ENCODE measurements at regions of chr6 and their contacts with region 1.

Region 1: GRCh38 chr6:106444777-106445507 is 84.4 kb downstream of the CRYBG1 start:
- DNase-seq: peak in 2 of 7 donors; percentile 26 to 34
- H3K4me3 ChIP-seq: no peak overlapping the region
- H3K27ac ChIP-seq: no peak overlapping the region
- H3K4me1 ChIP-seq: no peaks in the 10 kb centered on the region
- H3K27me3 ChIP-seq: peaks cover under 1% of the 10 kb centered on the region
- CTCF ChIP-seq: peak; percentile 57 to 87 (median 82)
- POLR2A ChIP-seq: no peak

Region 2: GRCh38 chr6:106339334-106340029 is 105.5 kb before region 1 on chr6:
- intact Hi-C with region 1: loop called in 1 of 2 experiments (anchors 10 kb)
- DNase-seq: peak; percentile 29 to 71 (median 62)
- H3K4me3 ChIP-seq: no peak overlapping the region
- H3K27ac ChIP-seq: no peak overlapping the region
- H3K4me1 ChIP-seq: no peaks in the 10 kb centered on the region
- H3K27me3 ChIP-seq: no peaks in the 10 kb centered on the region
- CTCF ChIP-seq: peak; percentile 55 to 67 (median 59)
- POLR2A ChIP-seq: no peak

Region 3: DNA sequence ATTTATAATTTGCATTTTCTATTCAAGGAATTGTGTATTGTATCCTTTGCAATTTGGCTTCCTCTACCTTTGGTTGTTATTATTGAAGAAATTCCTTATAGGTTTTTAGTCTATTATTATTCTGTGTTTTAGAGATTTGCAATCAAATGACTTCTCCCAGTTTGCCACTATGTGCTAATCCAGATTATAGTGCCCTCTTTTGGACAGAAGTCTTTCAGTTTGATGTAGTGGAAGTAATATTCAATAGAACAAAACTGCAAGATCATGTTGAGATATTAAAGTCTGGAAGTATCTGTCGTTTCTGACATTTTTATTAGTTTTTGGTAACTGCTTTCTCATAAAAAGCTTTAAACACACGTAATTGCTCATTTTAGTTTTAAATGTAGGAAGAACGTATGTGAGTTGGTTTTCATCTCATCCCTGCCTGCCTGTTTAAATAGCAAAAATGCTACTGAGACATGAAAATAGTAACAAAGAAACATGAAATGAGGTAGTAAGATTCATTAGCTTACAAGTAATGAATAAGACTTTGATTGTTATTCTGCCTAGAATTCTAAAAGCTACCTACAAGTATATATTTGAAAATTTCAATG is 111.5 kb after region 1 on chr6:
- intact Hi-C with region 1: loop called (anchors 5 kb)
- DNase-seq: no peak
- H3K4me3 ChIP-seq: no peak overlapping the region
- H3K27ac ChIP-seq: no peak overlapping the region
- H3K4me1 ChIP-seq: no peaks in the 10 kb centered on the region
- H3K27me3 ChIP-seq: no peaks in the 10 kb centered on the region
- CTCF ChIP-seq: peak in 3 of 6 experiments; percentile 4 to 30 (median 27)
- POLR2A ChIP-seq: no peak

Region 4: GRCh38 chr6:106568530-106568929 is 123.6 kb after region 1 on chr6:
- intact Hi-C with region 1: loop called (anchors 5 kb)
- DNase-seq: no peak
- H3K4me3 ChIP-seq: no peak overlapping the region
- H3K27ac ChIP-seq: no peak overlapping the region
- H3K4me1 ChIP-seq: no peaks in the 10 kb centered on the region
- H3K27me3 ChIP-seq: no peaks in the 10 kb centered on the region
- CTCF ChIP-seq: no peak
- POLR2A ChIP-seq: no peak

Region 5: DNA sequence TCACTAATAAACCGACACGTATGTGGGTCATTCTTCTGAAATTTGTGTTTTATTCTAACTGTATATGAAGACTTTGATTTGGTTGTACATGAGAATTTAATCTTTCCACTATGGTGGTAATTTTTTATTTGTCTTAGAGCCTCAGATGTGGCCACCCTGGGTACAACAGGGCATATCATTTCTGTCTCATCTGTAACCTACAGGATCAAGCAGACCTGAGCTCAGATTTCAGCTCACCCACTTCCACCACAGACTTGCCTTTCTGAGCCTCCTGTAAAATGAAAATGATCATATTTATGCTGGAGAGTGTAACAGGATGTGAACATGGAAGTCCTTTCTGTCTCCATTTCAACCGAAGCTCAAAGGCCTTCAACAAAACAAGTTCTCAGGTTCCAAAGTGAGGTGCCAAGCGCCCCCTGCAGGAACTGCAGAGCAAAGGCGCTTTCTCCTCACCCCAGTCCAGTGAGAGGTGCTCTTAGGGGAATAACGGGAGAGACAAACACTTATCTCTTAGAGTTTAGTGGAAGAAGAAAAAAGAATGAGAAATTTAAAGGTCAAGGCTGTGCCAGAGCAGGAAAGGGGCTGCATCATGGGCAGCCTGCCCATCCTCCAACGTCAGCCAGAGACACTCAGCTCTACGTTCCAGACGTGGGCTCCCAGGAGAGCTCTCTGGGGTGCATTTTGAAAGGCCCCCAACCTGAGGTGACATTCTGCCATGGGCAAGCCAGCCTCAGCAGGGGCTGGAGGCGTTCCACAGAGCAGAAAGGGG is 552.6 kb after region 1 on chr6:
- intact Hi-C with region 1: loop called (anchors 10 kb)
- DNase-seq: peak; percentile 63 to 79 (median 71)
- H3K4me3 ChIP-seq: no peak overlapping the region
- H3K27ac ChIP-seq: peak overlapping the region in 2 of 5 donors; percentile 60 to 82
- H3K4me1 ChIP-seq: peaks cover 0 to 6% of the 10 kb centered on the region in 2 donors
- H3K27me3 ChIP-seq: no peaks in the 10 kb centered on the region
- CTCF ChIP-seq: peak; percentile 63 to 82 (median 78)
- POLR2A ChIP-seq: no peak

Measured in adrenal gland (tissue), 19 donors.